AG04449 (cell line): ENCODE measurements at regions of chr10 and their contacts with region 1.

Region 1: GRCh38 chr10:47047671-47048525 is 136.7 kb downstream of the PTPN20 start:
- DNase-seq: no peak
- H3K4me3 ChIP-seq: no peak overlapping the region
- CTCF ChIP-seq: peak; percentile 92

Region 2: GRCh38 chr10:47031211-47031900 is 16.5 kb before region 1 on chr10:
- CTCF ChIA-PET with region 1: interaction called, 49 read pairs
- POLR2A ChIA-PET with region 1: no interaction called
- DNase-seq: no peak
- H3K4me3 ChIP-seq: no peak overlapping the region
- CTCF ChIP-seq: no peak

Region 3: DNA sequence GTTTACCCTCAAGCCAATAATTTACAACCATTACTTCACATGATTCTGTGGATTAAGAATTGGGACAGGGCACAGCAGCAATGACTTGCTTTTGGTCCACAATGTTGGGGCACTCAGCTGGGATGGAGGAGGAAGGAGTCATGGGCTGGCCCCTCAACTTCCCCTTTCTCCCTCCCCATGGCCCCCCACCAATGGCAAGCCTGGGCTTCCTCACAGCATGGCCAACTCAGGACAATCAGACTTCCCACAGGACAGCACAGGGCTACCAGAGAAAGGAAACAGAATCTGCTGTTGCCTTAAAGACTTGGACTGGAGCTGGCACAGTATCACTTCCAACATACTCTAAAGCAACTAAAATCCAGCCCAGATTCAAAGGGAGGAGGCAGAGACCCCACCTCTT is 24.0 kb after region 1 on chr10:
- CTCF ChIA-PET with region 1: interaction called, 23 read pairs
- POLR2A ChIA-PET with region 1: no interaction called
- DNase-seq: no peak
- H3K4me3 ChIP-seq: no peak overlapping the region
- CTCF ChIP-seq: no peak

Region 4: DNA sequence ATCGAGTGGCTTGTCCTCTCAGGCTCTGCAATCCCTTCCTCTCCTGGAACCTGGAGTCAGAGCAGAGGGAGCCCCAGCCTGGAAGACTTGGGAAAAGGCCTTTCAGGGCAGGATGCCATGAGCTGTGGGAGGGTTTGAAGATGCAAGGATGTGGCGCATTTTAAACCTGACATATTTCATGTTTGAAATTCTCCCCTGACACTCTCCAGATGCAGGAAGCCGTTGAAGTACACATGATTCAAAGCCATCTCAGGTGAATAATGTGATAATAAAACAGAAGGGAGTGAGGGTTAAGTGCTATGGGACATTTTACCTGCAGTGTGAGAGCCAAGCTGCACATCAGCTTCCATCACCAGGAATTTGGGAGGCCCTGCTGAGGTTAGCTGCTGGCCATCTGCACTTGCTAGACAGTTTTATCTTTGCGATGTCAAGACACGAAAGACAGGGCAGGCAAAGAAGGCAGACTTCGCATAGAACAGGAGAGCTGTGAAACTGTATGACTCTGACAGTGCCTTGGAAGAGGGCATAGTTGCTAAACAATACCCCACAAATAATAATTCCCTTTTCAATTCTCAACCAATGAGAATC is 93.0 kb after region 1 on chr10:
- CTCF ChIA-PET with region 1: no interaction called
- POLR2A ChIA-PET with region 1: no interaction called
- DNase-seq: no peak
- H3K4me3 ChIP-seq: no peak overlapping the region
- CTCF ChIP-seq: no peak

Region 5: GRCh38 chr10:47300429-47300931 is 252.6 kb after region 1 on chr10:
- CTCF ChIA-PET with region 1: interaction called, 18 read pairs
- POLR2A ChIA-PET with region 1: no interaction called
- DNase-seq: no peak
- H3K4me3 ChIP-seq: no peak overlapping the region
- CTCF ChIP-seq: no peak

Region 6: GRCh38 chr10:47311932-47312662 is 264.2 kb after region 1 on chr10:
- CTCF ChIA-PET with region 1: interaction called, 291 read pairs
- POLR2A ChIA-PET with region 1: no interaction called
- DNase-seq: peak; percentile 12
- H3K4me3 ChIP-seq: no peak overlapping the region
- CTCF ChIP-seq: peak; percentile 98